ENCODE measurements at regions of chr15 and their contacts with region 1.

Region 1: DNA sequence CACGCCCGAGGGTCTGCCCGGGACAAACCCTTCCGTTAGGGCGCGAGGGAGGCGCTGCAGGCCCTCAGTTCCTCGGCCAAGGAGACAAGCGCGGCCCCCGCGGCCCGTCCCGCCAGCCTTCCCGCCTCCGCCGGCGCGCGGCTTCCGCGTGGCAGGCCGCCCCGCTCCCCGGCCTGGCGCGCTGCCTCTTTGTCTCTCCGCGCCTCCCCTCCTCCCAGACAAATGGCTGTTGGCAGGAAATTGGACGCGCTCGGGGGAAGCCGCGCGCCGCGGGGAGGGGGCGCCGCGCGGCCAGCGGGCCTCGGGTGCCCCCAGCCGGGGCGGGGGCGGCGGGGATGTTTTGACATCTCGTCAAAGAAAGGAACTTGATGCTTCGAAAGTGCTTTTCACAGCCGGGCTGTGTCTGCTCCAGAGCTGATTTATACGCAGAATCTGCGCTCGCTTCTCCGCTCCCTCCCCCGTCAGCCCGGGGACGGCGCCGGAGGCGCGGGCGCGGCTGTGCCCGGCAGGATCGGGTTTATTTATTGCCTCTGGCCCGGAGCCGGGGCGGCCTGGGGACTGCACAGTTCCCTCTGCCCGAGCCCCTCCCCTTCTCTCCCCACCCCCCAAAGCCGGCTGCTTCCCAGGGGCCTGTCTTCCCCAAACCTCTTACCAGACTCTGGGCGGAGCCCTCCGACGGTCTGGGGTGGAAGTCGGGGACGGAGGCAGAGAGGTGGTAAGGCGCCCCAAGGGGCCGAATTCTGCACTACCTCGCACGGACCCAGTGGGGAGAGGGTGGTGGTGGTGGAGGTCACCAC is 20.7 kb downstream of the SHF start:
- DNase-seq: peak; percentile 76 to 83 (median 80)
- H3K4me3 ChIP-seq: peak overlapping the region; percentile 61 to 64
- H3K4me3 Mint-ChIP-seq: peak overlapping the region; percentile 62 to 85 (median 76)
- H3K27ac ChIP-seq: peak overlapping the region; percentile 83
- H3K27ac Mint-ChIP-seq: peak overlapping the region; percentile 75 to 92 (median 78)
- H3K4me1 ChIP-seq: peaks cover 21% of the 10 kb centered on the region
- H3K4me1 Mint-ChIP-seq: peaks cover 0 to 18% (median 6%) of the 10 kb centered on the region in 4 donors
- H3K27me3 ChIP-seq: no peaks in the 10 kb centered on the region
- H3K27me3 Mint-ChIP-seq: no peaks in the 10 kb centered on the region

Region 2: DNA sequence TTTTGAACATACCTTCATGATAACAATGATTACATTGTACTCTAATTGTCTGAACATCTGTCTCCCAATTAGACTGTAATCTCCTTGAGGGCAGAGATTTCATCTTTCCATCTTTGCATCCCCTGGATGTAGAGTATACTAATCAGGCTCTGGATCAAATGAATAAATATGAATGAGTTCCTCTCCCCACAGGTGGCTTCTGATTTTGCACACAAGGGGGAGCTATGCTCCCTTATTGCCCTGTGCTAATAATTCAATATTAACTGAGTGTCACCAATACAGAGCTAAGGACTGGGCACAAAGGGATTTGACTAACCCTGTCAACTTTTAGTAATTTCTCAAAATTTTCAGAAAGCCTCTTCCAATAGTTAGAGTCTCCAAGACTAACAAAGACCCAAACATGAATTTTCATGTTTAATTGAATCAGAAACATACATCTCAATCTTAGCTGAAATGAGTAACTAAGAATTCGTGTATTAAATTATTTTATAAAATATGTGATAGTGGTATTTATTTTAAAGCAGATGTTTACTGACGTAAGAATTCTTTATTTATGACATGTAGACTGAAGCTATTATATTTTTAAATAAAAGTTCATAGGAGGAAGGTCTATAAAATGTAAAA is 40.4 kb before region 1 on chr15:
- CTCF ChIA-PET with region 1: interaction called, 5 read pairs
- POLR2A ChIA-PET with region 1: interaction called, 3 read pairs
- intact Hi-C with region 1: loop called (anchors 2 kb)
- DNase-seq: peak in 4 of 5 donors; percentile 45 to 52 (median 48)
- H3K4me3 ChIP-seq: no peak overlapping the region
- H3K4me3 Mint-ChIP-seq: no peak overlapping the region
- H3K27ac ChIP-seq: no peak overlapping the region
- H3K27ac Mint-ChIP-seq: no peak overlapping the region
- H3K4me1 ChIP-seq: no peaks in the 10 kb centered on the region
- H3K4me1 Mint-ChIP-seq: peaks cover 0 to 8% (median 4%) of the 10 kb centered on the region in 4 donors
- H3K27me3 ChIP-seq: peaks cover 25% of the 10 kb centered on the region
- H3K27me3 Mint-ChIP-seq: peaks cover 34 to 51% of the 10 kb centered on the region in 2 donors

Region 3: GRCh38 chr15:45187894-45188830 is 21.1 kb after region 1 on chr15 and contains the start of gene SHF:
- CTCF ChIA-PET with region 1: interaction called, 30 read pairs
- POLR2A ChIA-PET with region 1: interaction called, 7 read pairs
- intact Hi-C with region 1: loop called (anchors 2 kb)
- DNase-seq: peak; percentile 49 to 78 (median 56)
- H3K4me3 ChIP-seq: peak within 1 kb of the TSS; percentile 67 to 90
- H3K4me3 Mint-ChIP-seq: peak within 1 kb of the TSS; percentile 86 to 97 (median 93)
- H3K27ac ChIP-seq: peak within 1 kb of the TSS; percentile 66
- H3K27ac Mint-ChIP-seq: peak within 1 kb of the TSS; percentile 77 to 95 (median 94)
- H3K4me1 ChIP-seq: peaks cover 7% of the 10 kb centered on the region
- H3K4me1 Mint-ChIP-seq: peaks cover 9 to 23% (median 13%) of the 10 kb centered on the region in 4 donors
- H3K27me3 ChIP-seq: no peaks in the 10 kb centered on the region
- H3K27me3 Mint-ChIP-seq: no peaks in the 10 kb centered on the region
- total RNA-seq, gene SHF: 5.3 to 6.7 TPM

Region 4: GRCh38 chr15:45279024-45279698 is 112.1 kb after region 1 on chr15:
- CTCF ChIA-PET with region 1: interaction called, 13 read pairs
- POLR2A ChIA-PET with region 1: interaction called, 8 read pairs
- intact Hi-C with region 1: loop called (anchors 1 kb)
- DNase-seq: peak; percentile 95 to 99 (median 98)
- H3K4me3 ChIP-seq: peak overlapping the region; percentile 82 to 83
- H3K4me3 Mint-ChIP-seq: peak overlapping the region; percentile 89 to 98 (median 93)
- H3K27ac ChIP-seq: peak overlapping the region; percentile 70
- H3K27ac Mint-ChIP-seq: peak overlapping the region; percentile 87 to 98 (median 96)
- H3K4me1 ChIP-seq: peaks cover 13% of the 10 kb centered on the region
- H3K4me1 Mint-ChIP-seq: peaks cover 7 to 26% (median 16%) of the 10 kb centered on the region in 4 donors
- H3K27me3 ChIP-seq: no peaks in the 10 kb centered on the region
- H3K27me3 Mint-ChIP-seq: no peaks in the 10 kb centered on the region

Region 5: GRCh38 chr15:45457641-45458433 is 290.8 kb after region 1 on chr15:
- CTCF ChIA-PET with region 1: interaction called, 6 read pairs
- POLR2A ChIA-PET with region 1: no interaction called
- intact Hi-C with region 1: loop called (anchors 1 kb)
- DNase-seq: peak; percentile 79 to 84 (median 81)
- H3K4me3 ChIP-seq: peak overlapping the region; percentile 21 to 51
- H3K4me3 Mint-ChIP-seq: peak overlapping the region; percentile 86 to 94 (median 88)
- H3K27ac ChIP-seq: peak overlapping the region; percentile 61
- H3K27ac Mint-ChIP-seq: peak overlapping the region; percentile 89 to 98 (median 96)
- H3K4me1 ChIP-seq: peaks cover 48% of the 10 kb centered on the region
- H3K4me1 Mint-ChIP-seq: peaks cover 34 to 51% (median 41%) of the 10 kb centered on the region in 4 donors
- H3K27me3 ChIP-seq: no peaks in the 10 kb centered on the region
- H3K27me3 Mint-ChIP-seq: no peaks in the 10 kb centered on the region